Activated naive CD4-positive, alpha-beta T cell treated with anti-CD3 and anti-CD28 coated beads for 36 hours (primary cell): ENCODE measurements at regions of chr9 and their contacts with region 1.

Region 1: DNA sequence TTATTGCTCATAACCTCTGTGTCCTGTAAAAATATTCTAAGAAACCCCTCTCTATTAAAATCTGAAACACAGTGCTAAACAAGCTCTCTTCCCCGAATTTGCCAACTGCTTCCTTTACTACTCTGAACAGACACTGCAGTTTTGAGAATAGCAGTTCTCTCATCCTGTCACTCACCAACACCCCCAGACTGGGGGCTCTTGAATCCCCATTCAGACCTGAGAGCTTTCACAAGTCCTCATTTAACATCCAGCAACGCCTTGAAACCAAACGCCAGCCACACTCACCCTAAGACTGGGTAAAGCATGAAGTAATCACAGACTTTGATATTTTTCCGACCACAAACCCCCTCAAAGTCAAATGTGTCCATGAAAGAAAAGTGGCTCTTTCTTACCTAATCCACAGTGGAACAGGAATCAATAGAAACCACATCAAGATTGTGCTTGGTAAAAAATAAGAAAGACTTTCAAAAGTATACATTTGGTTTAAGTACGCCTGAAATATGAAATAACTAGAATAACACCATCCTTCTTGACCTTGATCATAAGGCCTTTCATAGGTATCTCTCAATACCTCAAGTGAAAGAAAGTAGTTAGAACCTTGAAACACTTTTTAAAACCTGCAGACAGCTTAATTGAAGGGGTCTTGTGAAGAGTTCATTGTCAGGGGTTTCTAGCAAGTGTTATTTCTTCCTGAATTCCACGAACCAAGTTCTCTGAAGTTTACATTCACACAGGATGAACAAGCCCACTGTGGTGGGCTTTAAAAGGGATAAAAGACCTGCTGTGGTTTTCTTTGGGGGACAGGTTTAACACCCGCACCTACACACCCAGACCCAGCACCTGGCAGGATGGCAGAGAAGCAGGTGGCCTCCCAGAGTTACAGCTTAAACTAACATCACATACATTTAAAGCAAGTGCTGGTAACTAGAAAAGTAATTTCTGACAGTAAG is 412.6 kb downstream of the MLLT3 start:
- DNase-seq: peak; percentile 56
- H3K4me3 Mint-ChIP-seq: no peak overlapping the region
- H3K27ac Mint-ChIP-seq: peak overlapping the region; percentile 70
- H3K4me1 Mint-ChIP-seq: peaks cover 31% of the 10 kb centered on the region
- H3K27me3 Mint-ChIP-seq: no peaks in the 10 kb centered on the region

Region 2: GRCh38 chr9:19517202-19517942 is 692.3 kb before region 1 on chr9:
- CTCF ChIA-PET with region 1: no interaction called
- intact Hi-C with region 1: loop called (anchors 1 kb)
- DNase-seq: peak; percentile 21
- H3K4me3 Mint-ChIP-seq: no peak overlapping the region
- H3K27ac Mint-ChIP-seq: peak overlapping the region; percentile 15
- H3K4me1 Mint-ChIP-seq: peaks cover 31% of the 10 kb centered on the region
- H3K27me3 Mint-ChIP-seq: peaks cover 11% of the 10 kb centered on the region

Region 3: GRCh38 chr9:19976226-19976625 is 233.4 kb before region 1 on chr9:
- CTCF ChIA-PET with region 1: no interaction called
- intact Hi-C with region 1: loop called (anchors 1 kb)
- DNase-seq: peak; percentile 69
- H3K4me3 Mint-ChIP-seq: no peak overlapping the region
- H3K27ac Mint-ChIP-seq: peak overlapping the region; percentile 83
- H3K4me1 Mint-ChIP-seq: peaks cover 28% of the 10 kb centered on the region
- H3K27me3 Mint-ChIP-seq: no peaks in the 10 kb centered on the region

Region 4: DNA sequence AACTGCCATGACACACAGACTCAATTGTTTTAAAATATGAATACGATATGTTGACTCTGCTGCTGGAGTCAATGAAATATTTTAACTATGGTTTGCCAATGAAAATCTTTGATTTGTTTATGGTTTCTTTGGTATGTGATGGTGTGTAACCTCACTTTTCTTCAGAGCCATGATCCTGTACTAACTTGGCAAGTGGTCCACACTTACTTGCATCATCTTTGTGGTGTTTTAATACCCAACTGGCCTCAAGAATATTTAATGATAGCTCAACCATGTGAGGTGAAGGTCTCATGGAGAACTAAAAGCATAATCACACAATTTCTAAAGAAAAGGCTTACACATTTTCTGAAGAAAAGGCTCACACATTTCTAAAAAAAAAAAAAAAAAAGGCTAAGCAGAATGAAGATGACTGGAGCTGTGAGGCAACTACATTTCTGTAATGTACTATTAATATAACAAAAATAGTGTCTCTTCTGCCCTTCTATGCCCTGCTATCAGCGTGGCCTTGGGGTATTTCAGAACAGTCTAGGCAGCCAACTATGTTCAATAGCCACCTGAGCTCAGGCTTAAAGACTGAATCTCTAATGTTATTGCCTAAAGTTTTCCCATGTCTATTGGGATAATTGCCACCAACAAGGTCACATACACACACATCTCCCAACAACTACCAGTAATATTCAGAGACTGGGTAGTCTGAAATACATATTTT is 17.7 kb after region 1 on chr9:
- CTCF ChIA-PET with region 1: no interaction called
- intact Hi-C with region 1: no loop called
- DNase-seq: no peak
- H3K4me3 Mint-ChIP-seq: no peak overlapping the region
- H3K27ac Mint-ChIP-seq: no peak overlapping the region
- H3K4me1 Mint-ChIP-seq: peaks cover 30% of the 10 kb centered on the region
- H3K27me3 Mint-ChIP-seq: no peaks in the 10 kb centered on the region

Region 5: DNA sequence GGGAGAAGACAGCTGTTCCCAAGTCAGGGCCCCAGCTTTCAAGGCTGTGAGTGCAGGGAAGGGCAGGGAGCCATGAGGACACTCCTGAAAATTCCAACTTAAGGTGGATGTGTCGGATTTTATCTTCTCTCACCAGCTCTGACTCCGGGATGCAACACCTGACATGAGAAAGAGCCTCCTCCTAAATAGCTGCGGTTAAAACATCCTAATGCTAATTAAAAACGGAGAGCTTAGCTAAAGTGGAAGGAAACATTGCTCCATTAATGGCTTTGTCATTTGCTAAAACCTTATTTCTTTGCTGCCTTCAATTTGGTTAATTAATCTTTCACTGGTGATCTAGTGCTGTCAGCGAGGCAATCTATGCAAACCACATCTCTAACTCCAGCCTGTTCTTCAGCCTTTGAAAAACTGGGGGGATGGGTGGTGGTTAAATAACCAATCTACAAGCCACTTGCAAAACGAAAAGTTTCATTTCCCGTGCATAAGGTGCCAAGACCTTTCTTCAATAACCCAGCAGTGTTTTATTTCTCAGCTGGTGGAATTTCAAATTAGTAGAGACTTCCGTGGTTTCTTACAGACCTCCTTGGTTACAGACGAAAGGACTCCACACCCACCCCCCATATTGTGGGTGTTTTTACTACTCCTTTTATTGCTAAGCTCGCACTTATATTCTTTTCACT is 33.0 kb after region 1 on chr9:
- CTCF ChIA-PET with region 1: no interaction called
- intact Hi-C with region 1: loop called (anchors 1 kb)
- DNase-seq: peak; percentile 52
- H3K4me3 Mint-ChIP-seq: no peak overlapping the region
- H3K27ac Mint-ChIP-seq: no peak overlapping the region
- H3K4me1 Mint-ChIP-seq: peaks cover 60% of the 10 kb centered on the region
- H3K27me3 Mint-ChIP-seq: no peaks in the 10 kb centered on the region

Region 6: GRCh38 chr9:20256284-20256948 is 46.8 kb after region 1 on chr9:
- CTCF ChIA-PET with region 1: no interaction called
- intact Hi-C with region 1: loop called (anchors 1 kb)
- DNase-seq: no peak
- H3K4me3 Mint-ChIP-seq: no peak overlapping the region
- H3K27ac Mint-ChIP-seq: no peak overlapping the region
- H3K4me1 Mint-ChIP-seq: peaks cover 38% of the 10 kb centered on the region
- H3K27me3 Mint-ChIP-seq: no peaks in the 10 kb centered on the region

Region 7: DNA sequence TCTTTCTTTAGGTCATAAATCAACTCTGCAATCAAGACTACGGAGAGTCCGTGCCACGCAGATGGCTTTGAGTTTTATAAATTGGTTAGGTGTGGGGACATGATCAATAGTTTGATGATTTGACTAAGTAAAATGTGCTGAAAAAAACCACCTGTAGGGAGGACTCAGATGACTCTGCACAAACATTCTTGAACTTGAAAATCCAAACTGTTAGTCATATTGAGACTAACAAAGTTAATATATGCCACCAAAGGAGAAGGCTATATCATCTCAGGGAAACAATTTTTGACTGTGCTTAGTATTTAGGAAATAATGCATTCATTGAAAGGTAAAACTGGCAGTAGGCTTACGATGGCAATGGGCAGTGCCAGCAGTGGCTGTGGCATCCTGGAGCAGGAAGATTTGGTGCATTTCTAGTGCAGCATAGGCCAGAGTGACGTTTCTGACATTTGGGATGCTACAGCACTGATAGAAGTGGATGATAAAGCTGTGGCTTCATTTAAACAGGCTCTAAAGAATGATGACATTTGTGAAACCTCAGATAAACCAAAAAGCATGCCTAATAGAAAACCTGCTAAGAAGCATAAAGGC is 121.5 kb after region 1 on chr9:
- CTCF ChIA-PET with region 1: no interaction called
- intact Hi-C with region 1: loop called (anchors 1 kb)
- DNase-seq: peak; percentile 18
- H3K4me3 Mint-ChIP-seq: no peak overlapping the region
- H3K27ac Mint-ChIP-seq: peak overlapping the region; percentile 15
- H3K4me1 Mint-ChIP-seq: peaks cover 22% of the 10 kb centered on the region
- H3K27me3 Mint-ChIP-seq: no peaks in the 10 kb centered on the region

Region 8: DNA sequence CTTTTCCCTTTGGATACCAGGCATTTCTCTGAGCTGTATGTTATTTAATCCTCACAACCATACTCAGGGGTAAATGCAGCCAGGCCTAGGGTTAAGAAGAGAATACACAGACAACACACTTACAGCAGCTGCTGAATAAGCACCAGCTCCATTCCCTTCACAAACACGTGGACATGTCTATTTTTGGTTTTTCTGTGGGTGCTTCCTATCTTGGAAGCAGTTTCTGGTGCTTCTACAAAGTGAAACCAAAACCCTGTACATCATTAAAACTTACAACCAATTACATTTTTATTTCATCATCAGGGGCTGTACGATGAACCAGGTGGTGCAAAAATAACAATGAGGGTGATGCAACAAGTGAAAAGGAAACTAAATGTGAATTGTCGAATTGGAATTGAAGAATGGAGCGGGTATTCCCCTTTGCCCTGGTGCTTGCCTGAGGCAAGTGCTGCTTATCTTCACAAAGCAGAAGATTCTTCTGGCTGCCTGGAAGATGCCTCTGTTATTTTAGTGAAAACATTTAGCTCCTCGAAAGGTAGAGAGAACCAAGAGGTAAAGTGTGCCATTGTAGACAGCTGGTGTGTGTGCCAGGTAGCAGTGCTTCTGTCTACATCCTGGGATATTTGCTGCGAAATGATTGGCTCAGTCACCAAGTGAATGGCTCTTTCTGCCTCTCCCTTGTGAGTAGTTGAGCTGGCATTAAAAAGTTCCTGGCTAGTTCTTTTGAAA is 886.7 kb after region 1 on chr9:
- CTCF ChIA-PET with region 1: no interaction called
- intact Hi-C with region 1: loop called (anchors 1 kb)
- DNase-seq: peak; percentile 67
- H3K4me3 Mint-ChIP-seq: peak overlapping the region; percentile 76
- H3K27ac Mint-ChIP-seq: peak overlapping the region; percentile 94
- H3K4me1 Mint-ChIP-seq: peaks cover 39% of the 10 kb centered on the region
- H3K27me3 Mint-ChIP-seq: no peaks in the 10 kb centered on the region